ENCODE measurements at regions of chr7 and their contacts with region 1.

Region 1: DNA sequence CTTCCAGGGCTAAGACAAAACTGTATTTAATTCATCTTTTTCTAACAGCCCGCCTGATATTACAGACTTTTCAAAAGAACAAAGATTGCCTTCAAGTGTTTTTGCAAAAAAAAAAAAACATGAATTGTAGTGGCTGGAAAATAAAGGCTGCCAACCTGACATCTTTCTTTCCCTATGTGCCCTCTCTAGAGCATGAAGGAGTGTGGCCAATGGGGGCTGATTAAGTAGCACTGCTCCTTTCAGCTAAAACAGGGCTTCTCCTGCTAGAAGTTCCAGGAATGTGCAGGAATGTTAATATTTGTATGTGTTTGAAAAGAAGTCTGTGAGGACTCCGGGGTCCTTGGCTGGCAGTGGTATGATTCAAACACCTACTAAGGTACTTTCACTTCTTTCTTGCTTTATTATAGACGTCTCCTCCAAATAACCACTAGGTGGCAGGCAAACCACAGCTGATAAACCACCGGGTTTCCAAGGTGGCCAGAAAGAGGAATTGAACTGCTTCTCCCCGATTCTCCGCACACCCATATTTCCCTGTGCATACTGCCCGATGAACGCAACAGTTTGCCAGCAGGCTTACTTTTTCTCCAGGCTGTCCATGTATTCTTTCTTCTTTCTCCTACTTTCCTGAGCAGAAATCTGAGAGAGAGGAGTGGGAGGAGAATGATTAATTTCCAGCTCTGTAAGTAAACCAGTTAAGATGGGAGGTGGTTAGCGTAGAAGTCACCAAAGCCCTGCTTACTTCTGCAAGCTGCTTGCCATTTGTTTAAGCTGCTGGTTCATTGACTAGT is 56.8 kb upstream of the DGKI start:
- DNase-seq: no peak
- H3K4me3 ChIP-seq: no peak overlapping the region
- H3K27ac ChIP-seq: peak overlapping the region; percentile 39
- H3K4me1 ChIP-seq: peaks cover 45% of the 10 kb centered on the region
- H3K27me3 ChIP-seq: no peaks in the 10 kb centered on the region
- CTCF ChIP-seq: peak; percentile 87

Region 2: GRCh38 chr7:137978464-137979237 is 75.1 kb after region 1 on chr7:
- intact Hi-C with region 1: no loop called
- DNase-seq: peak; percentile 52
- H3K4me3 ChIP-seq: no peak overlapping the region
- H3K27ac ChIP-seq: peak overlapping the region; percentile 86
- H3K4me1 ChIP-seq: peaks cover 89% of the 10 kb centered on the region
- H3K27me3 ChIP-seq: no peaks in the 10 kb centered on the region
- CTCF ChIP-seq: no peak

Region 3: GRCh38 chr7:138008547-138009349 is 105.2 kb after region 1 on chr7:
- intact Hi-C with region 1: loop called (anchors 2 kb)
- DNase-seq: no peak
- H3K4me3 ChIP-seq: no peak overlapping the region
- H3K27ac ChIP-seq: no peak overlapping the region
- H3K4me1 ChIP-seq: peaks cover 4% of the 10 kb centered on the region
- H3K27me3 ChIP-seq: no peaks in the 10 kb centered on the region
- CTCF ChIP-seq: peak; percentile 96

Region 4: GRCh38 chr7:138161600-138162081 is 258.1 kb after region 1 on chr7:
- intact Hi-C with region 1: no loop called
- DNase-seq: peak; percentile 52
- H3K4me3 ChIP-seq: no peak overlapping the region
- H3K27ac ChIP-seq: no peak overlapping the region
- H3K4me1 ChIP-seq: no peaks in the 10 kb centered on the region
- H3K27me3 ChIP-seq: no peaks in the 10 kb centered on the region
- CTCF ChIP-seq: peak; percentile 77